HepG2 (cell line): ENCODE measurements at regions of chr22 and their contacts with region 1.

Region 1: DNA sequence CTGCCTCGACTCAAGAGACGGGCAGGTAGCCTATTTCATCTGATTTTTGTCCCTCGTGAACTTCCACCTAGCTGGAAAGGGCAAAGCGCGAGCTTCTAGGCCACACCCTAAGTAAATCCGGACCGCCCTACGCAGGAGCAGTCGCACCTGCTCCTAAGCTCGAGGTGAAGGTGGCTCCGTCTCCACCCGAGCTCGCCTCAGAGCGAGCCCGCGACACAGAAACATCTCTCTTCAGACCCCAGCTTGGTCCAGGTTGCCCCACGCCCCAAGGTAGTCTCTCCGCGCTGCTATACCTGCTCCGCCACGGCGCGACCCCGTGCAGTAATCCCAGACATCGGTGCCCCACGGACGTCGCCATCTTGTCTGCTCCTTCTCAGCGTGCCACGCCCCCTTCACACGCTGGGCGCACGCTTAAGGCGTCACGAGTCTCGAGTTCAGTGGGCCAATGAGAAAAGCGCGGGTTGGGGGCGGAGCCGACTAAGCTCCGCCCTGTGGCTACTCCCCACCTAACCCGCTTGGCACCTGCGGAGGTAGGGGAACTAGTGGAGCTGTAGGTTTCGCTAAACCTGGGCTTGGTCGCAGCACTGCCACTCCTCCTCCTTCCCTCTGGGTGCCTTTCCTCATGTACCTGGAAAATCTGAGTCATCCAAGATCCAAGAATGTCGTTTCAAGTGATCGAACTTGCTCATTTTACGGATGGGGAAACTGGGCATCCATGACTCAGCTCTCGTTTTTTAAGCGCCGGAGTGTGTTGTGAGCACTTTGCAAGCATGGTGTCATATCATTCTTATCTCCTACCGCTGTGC is at the start of gene PISD:
- DNase-seq: peak; percentile 92
- ATAC-seq: peak; percentile 92
- H3K4me3 ChIP-seq: peak within 1 kb of the TSS; percentile 83 to 100 (median 93)
- H3K27ac ChIP-seq: peak within 1 kb of the TSS; percentile 83
- H3K4me1 ChIP-seq: peaks cover 42% of the 10 kb centered on the region
- H3K27me3 ChIP-seq: no peaks in the 10 kb centered on the region; a peak in 2 of 5 replicates
- CTCF ChIP-seq: no peak
- EP300 ChIP-seq: peak in 1 of 2 experiments; percentile 48; a peak in 1 of 4 replicates
- POLR2A ChIP-seq: peak; percentile 90
- RAD21 ChIP-seq: no peak
- total RNA-seq, gene PISD: 30.0 and 47.7 TPM in 2 replicates

Region 2: GRCh38 chr22:31107178-31107893 is 554.7 kb before region 1 on chr22 and contains the start of gene SELENOM:
- CTCF ChIA-PET with region 1: no interaction called
- POLR2A ChIA-PET with region 1: no interaction called
- in situ Hi-C with region 1: no loop called
- intact Hi-C with region 1: no loop called
- DNase-seq: peak; percentile 86
- ATAC-seq: peak; percentile 90
- H3K4me3 ChIP-seq: peak within 1 kb of the TSS; percentile 39 to 64 (median 44); a peak in 5 of 6 replicates
- H3K27ac ChIP-seq: no peak within 1 kb of the TSS
- H3K4me1 ChIP-seq: peaks cover 28% of the 10 kb centered on the region
- H3K27me3 ChIP-seq: no peaks in the 10 kb centered on the region
- CTCF ChIP-seq: peak; percentile 95
- EP300 ChIP-seq: no peak
- POLR2A ChIP-seq: no peak
- RAD21 ChIP-seq: peak; percentile 90
- total RNA-seq, gene SELENOM: 2.4 and 4.1 TPM in 2 replicates

Region 3: GRCh38 chr22:31615940-31616314 is 46.1 kb before region 1 on chr22:
- CTCF ChIA-PET with region 1: no interaction called
- POLR2A ChIA-PET with region 1: no interaction called
- in situ Hi-C with region 1: no loop called
- intact Hi-C with region 1: no loop called
- DNase-seq: no peak
- ATAC-seq: peak; percentile 4
- H3K4me3 ChIP-seq: no peak overlapping the region
- H3K27ac ChIP-seq: peak overlapping the region; percentile 15
- H3K4me1 ChIP-seq: peaks cover 40% of the 10 kb centered on the region
- H3K27me3 ChIP-seq: no peaks in the 10 kb centered on the region
- CTCF ChIP-seq: no peak
- EP300 ChIP-seq: no peak
- POLR2A ChIP-seq: no peak
- RAD21 ChIP-seq: no peak

Region 4: DNA sequence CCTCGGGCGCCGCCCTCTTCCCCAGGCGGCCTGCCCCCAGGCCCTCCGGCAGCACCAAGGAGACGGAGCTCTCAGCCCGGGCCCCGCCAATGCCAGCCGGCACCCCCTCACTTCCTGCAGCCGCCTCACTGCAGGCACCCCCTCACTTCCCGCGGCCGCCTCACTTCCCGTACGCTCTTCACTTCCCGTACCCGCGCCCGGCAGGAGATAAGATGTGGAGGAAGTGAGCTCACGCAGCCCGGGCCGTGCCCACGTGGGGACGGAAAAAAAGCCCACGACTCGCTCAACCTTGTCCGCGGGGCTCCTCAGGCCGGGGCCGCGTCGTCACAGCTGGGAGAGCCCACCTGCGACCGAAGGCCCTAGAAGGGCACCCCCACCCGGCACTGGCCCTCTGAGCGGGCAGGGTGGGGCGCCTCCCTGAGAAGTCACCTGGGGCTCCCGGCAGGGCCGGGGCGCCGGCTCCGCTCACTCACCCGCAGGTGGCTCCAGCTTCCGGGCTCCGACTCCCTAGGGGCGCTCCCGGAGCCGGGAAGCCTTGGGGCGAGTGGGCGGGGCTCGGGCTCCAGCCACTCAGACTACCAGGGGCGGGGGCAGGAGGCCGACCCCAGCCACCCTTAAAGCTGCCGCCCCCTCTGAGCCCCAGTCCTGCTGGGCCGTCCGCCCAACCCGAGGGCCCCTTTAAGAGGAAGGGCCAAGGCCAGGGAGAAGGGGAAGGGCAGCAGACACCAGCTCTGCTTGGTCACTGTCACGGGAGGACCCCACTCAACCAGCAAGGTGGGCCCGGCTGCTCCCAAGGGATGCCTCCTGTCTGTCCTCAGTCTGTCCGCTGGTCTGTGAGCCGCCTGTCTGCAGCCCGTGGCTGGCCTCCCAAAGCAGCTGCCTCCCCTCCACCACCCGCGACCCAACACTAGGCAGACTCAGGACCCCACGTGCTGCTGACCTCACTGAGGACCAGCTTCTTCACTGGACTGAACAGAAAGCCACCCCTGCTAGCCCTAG is 31.4 kb before region 1 on chr22:
- CTCF ChIA-PET with region 1: no interaction called
- POLR2A ChIA-PET with region 1: interaction called, 28 read pairs
- in situ Hi-C with region 1: no loop called
- intact Hi-C with region 1: no loop called
- DNase-seq: peak; percentile 75
- ATAC-seq: peak; percentile 80
- H3K4me3 ChIP-seq: peak overlapping the region; percentile 66 to 86 (median 77)
- H3K27ac ChIP-seq: peak overlapping the region; percentile 72
- H3K4me1 ChIP-seq: peaks cover 72% of the 10 kb centered on the region
- H3K27me3 ChIP-seq: no peaks in the 10 kb centered on the region
- CTCF ChIP-seq: peak; percentile 24; the same call in 1 of the 2 replicates
- EP300 ChIP-seq: no peak
- POLR2A ChIP-seq: peak; percentile 55 to 56; a peak in 3 of 4 replicates
- RAD21 ChIP-seq: no peak

Region 5: GRCh38 chr22:31676700-31677099 is 14.6 kb after region 1 on chr22:
- CTCF ChIA-PET with region 1: no interaction called
- POLR2A ChIA-PET with region 1: interaction called, 12 read pairs
- in situ Hi-C with region 1: no loop called
- intact Hi-C with region 1: no loop called
- DNase-seq: no peak
- ATAC-seq: no peak
- H3K4me3 ChIP-seq: no peak overlapping the region
- H3K27ac ChIP-seq: no peak overlapping the region
- H3K4me1 ChIP-seq: no peaks in the 10 kb centered on the region; the same call in 1 of the 2 replicates
- H3K27me3 ChIP-seq: no peaks in the 10 kb centered on the region
- CTCF ChIP-seq: no peak
- EP300 ChIP-seq: no peak
- POLR2A ChIP-seq: no peak
- RAD21 ChIP-seq: no peak

Region 6: GRCh38 chr22:31692186-31692886 is 30.3 kb after region 1 on chr22:
- CTCF ChIA-PET with region 1: no interaction called
- POLR2A ChIA-PET with region 1: no interaction called
- in situ Hi-C with region 1: no loop called
- intact Hi-C with region 1: no loop called
- DNase-seq: no peak
- ATAC-seq: no peak
- H3K4me3 ChIP-seq: no peak overlapping the region
- H3K27ac ChIP-seq: no peak overlapping the region
- H3K4me1 ChIP-seq: no peaks in the 10 kb centered on the region
- H3K27me3 ChIP-seq: no peaks in the 10 kb centered on the region
- CTCF ChIP-seq: no peak
- EP300 ChIP-seq: no peak
- POLR2A ChIP-seq: no peak
- RAD21 ChIP-seq: no peak

Region 7: GRCh38 chr22:31764785-31765184 is 102.7 kb after region 1 on chr22:
- CTCF ChIA-PET with region 1: no interaction called
- POLR2A ChIA-PET with region 1: no interaction called
- in situ Hi-C with region 1: no loop called
- intact Hi-C with region 1: no loop called
- DNase-seq: no peak
- ATAC-seq: no peak
- H3K4me3 ChIP-seq: no peak overlapping the region
- H3K27ac ChIP-seq: no peak overlapping the region
- H3K4me1 ChIP-seq: no peaks in the 10 kb centered on the region
- H3K27me3 ChIP-seq: no peaks in the 10 kb centered on the region
- CTCF ChIP-seq: no peak
- EP300 ChIP-seq: no peak
- POLR2A ChIP-seq: no peak
- RAD21 ChIP-seq: no peak

Region 8: DNA sequence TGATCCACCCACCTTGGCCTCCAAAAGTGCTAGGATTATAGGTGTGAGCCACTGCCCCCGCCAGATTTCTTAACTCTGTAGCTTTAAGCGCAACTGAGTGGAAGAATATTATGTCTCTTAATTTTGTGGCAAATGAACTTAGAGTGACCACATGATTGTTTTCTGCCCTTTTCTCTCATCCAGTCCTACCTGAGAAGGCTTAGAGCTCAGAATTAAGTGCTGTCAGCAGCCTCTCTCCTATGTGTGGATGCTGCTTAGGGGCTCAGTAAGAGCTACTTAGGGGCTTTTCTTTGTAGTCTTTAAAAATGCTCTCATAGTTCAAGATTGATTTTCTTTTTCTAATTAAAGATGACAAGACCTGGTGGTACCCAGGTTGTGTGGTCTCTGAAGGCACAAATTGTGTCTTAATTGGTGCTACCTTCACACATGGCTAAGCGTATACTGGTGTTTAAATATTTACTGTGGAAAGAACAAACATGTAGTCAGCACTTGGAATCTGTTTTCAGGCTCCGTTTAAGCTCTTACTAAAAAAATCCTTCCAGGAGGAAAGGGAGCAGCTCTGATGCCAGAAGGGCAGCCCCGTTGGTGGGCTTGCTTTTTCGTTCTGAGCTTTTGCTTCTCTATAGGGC is 151.0 kb after region 1 on chr22:
- CTCF ChIA-PET with region 1: no interaction called
- POLR2A ChIA-PET with region 1: interaction called, 17 read pairs
- in situ Hi-C with region 1: no loop called
- intact Hi-C with region 1: loop called (anchors 10 kb)
- DNase-seq: peak; percentile 22
- ATAC-seq: peak; percentile 26; the same call in 1 of the 3 replicates
- H3K4me3 ChIP-seq: no peak overlapping the region
- H3K27ac ChIP-seq: peak overlapping the region; percentile 36
- H3K4me1 ChIP-seq: peaks cover 40% of the 10 kb centered on the region
- H3K27me3 ChIP-seq: no peaks in the 10 kb centered on the region
- CTCF ChIP-seq: no peak
- EP300 ChIP-seq: peak in 1 of 2 experiments; percentile 23; a peak in 1 of 4 replicates
- POLR2A ChIP-seq: no peak
- RAD21 ChIP-seq: no peak

Region 9: DNA sequence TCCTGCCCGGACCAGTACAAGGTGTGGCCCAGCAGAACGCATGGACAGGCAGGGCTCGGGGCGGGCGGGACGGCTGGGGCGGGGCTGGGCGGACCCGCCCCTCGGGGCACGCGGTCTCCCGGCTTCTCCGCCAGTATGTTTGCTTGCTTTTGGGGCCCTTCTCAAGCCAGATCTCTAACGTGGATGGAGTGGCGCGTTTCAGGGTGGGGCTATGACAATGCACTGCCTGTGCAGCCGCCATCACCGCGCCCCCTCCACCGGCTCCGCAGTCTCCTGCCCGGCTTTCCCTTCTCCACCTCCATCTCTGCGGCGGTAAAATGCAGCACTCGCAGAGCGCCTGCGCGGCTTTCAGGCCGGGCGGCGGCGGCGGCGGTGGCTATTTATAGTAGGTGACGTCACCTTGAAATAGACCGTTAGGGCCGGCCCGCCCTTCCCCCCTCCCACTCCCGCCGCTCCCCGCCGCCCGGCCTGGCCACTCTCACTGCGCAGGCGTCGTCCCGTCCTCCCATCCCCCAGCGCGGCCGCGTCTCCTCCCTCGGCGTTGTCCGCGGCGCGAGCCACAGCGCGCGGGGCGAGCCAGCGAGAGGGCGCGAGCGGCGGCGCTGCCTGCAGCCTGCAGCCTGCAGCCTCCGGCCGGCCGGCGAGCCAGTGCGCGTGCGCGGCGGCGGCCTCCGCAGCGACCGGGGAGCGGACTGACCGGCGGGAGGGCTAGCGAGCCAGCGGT is 282.1 kb after region 1 on chr22 and contains the start of gene YWHAH:
- CTCF ChIA-PET with region 1: interaction called, 3 read pairs
- POLR2A ChIA-PET with region 1: interaction called, 4 read pairs
- in situ Hi-C with region 1: no loop called
- intact Hi-C with region 1: loop called (anchors 1 kb)
- DNase-seq: peak; percentile 88
- ATAC-seq: peak; percentile 81
- H3K4me3 ChIP-seq: peak within 1 kb of the TSS; percentile 61 to 94 (median 94)
- H3K27ac ChIP-seq: peak within 1 kb of the TSS; percentile 86
- H3K4me1 ChIP-seq: peaks cover 44% of the 10 kb centered on the region
- H3K27me3 ChIP-seq: no peaks in the 10 kb centered on the region; a peak in 1 of 5 replicates
- CTCF ChIP-seq: no peak; the same call in 1 of the 2 replicates
- EP300 ChIP-seq: no peak
- POLR2A ChIP-seq: peak; percentile 69 to 84
- RAD21 ChIP-seq: no peak
- total RNA-seq, gene YWHAH: 92.7 and 112 TPM in 2 replicates

Region 10: DNA sequence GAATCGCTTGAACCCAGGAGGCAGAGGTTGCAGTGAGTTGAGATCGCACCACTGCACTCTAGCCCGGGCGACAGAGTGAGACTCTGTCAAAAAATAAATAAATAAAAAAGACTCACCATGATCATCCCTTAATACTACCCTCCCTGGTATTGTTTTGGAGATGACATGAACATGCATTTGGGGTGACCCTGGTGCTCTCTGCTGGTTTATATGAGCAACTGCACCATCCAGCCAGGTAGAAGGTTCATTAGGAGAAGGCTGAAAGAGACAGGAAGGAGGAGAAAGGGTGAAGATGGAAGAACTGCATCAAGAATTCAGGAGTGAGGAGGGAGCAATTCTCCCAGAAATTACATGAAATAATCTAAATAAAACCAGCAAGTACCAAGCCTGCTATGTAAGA is 418.9 kb after region 1 on chr22:
- CTCF ChIA-PET with region 1: interaction called, 5 read pairs
- POLR2A ChIA-PET with region 1: no interaction called
- in situ Hi-C with region 1: loop called (anchors 25 kb)
- intact Hi-C with region 1: loop called (anchors 10 kb)
- DNase-seq: peak; percentile 47
- ATAC-seq: peak; percentile 62
- H3K4me3 ChIP-seq: no peak overlapping the region
- H3K27ac ChIP-seq: no peak overlapping the region
- H3K4me1 ChIP-seq: no peaks in the 10 kb centered on the region
- H3K27me3 ChIP-seq: peaks cover 0 to 3% of the 10 kb centered on the region in 2 experiments; a peak in 3 of 5 replicates
- CTCF ChIP-seq: peak; percentile 69
- EP300 ChIP-seq: no peak
- POLR2A ChIP-seq: no peak
- RAD21 ChIP-seq: peak; percentile 57